ENCODE measurements at regions of chr2 and their contacts with region 1.

Region 1: GRCh38 chr2:238784671-238785527 is 63.0 kb upstream of the TWIST2 start:
- DNase-seq: peak; percentile 58 to 65
- ATAC-seq: peak; percentile 50 to 88 (median 79)
- H3K4me3 ChIP-seq: no peak overlapping the region
- H3K27ac ChIP-seq: no peak overlapping the region
- H3K4me1 ChIP-seq: no peaks in the 10 kb centered on the region
- H3K27me3 ChIP-seq: peaks cover 0 to 7% (median 5%) of the 10 kb centered on the region in 7 donors
- CTCF ChIP-seq: peak; percentile 62 to 91 (median 87)

Region 2: GRCh38 chr2:238352361-238352760 is 432.5 kb before region 1 on chr2:
- intact Hi-C with region 1: loop called in 2 of 10 experiments (anchors 10 kb)
- DNase-seq: no peak
- ATAC-seq: peak in 2 of 8 donors; percentile 13 to 31
- H3K4me3 ChIP-seq: no peak overlapping the region
- H3K27ac ChIP-seq: no peak overlapping the region
- H3K4me1 ChIP-seq: peaks cover 0 to 4% (median 0%) of the 10 kb centered on the region in 9 donors
- H3K27me3 ChIP-seq: no peaks in the 10 kb centered on the region
- CTCF ChIP-seq: no peak

Region 3: DNA sequence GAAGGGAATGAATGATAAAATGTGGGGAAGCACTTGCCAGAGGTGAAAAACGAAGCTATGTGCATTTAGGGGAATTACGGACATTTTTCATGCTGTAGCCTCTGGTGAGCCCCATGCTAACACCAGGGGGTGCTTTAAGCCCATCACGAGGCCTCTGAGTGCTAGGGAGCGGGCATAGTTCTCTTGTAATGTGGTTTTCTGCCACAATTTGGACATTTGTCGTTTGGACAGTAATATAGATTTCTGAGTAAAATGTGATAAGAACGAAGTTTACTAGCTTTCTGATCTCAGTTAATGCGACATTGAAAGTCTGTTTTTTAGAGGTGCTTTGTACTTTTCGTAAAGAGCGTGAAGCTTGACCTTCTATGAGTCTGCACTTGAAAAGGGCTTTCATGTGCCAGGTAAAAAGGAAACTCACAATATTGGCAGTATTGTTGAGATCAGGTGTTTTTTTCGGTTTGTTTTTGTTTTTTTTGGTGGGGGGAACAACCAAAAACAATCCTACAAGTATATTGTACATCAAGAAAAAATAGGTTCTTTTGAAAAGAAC is 414.0 kb before region 1 on chr2:
- intact Hi-C with region 1: loop called in 9 of 10 experiments (anchors 2 to 10 kb)
- DNase-seq: peak; percentile 43 to 48
- ATAC-seq: peak; percentile 89 to 99 (median 94)
- H3K4me3 ChIP-seq: no peak overlapping the region
- H3K27ac ChIP-seq: no peak overlapping the region
- H3K4me1 ChIP-seq: peaks cover 0 to 3% (median 0%) of the 10 kb centered on the region in 9 donors
- H3K27me3 ChIP-seq: no peaks in the 10 kb centered on the region
- CTCF ChIP-seq: peak; percentile 53 to 89 (median 81)

Region 4: GRCh38 chr2:238513346-238513745 is 271.6 kb before region 1 on chr2:
- intact Hi-C with region 1: loop called in 6 of 10 experiments (anchors 2 to 10 kb)
- DNase-seq: no peak
- ATAC-seq: peak in 3 of 8 donors; percentile 51 to 64 (median 62)
- H3K4me3 ChIP-seq: no peak overlapping the region
- H3K27ac ChIP-seq: no peak overlapping the region
- H3K4me1 ChIP-seq: no peaks in the 10 kb centered on the region
- H3K27me3 ChIP-seq: peaks cover 0 to 16% (median 8%) of the 10 kb centered on the region in 7 donors
- CTCF ChIP-seq: peak; percentile 24 to 62 (median 50)

Region 5: GRCh38 chr2:238523158-238524110 is 261.5 kb before region 1 on chr2:
- intact Hi-C with region 1: loop called in 5 of 10 experiments (anchors 10 kb)
- DNase-seq: no peak
- ATAC-seq: peak in 4 of 8 donors; percentile 40 to 68 (median 50)
- H3K4me3 ChIP-seq: no peak overlapping the region
- H3K27ac ChIP-seq: no peak overlapping the region
- H3K4me1 ChIP-seq: no peaks in the 10 kb centered on the region
- H3K27me3 ChIP-seq: peaks cover 0 to 30% (median 0%) of the 10 kb centered on the region in 7 donors
- CTCF ChIP-seq: peak in 4 of 9 donors; percentile 14 to 23 (median 21)

Region 6: DNA sequence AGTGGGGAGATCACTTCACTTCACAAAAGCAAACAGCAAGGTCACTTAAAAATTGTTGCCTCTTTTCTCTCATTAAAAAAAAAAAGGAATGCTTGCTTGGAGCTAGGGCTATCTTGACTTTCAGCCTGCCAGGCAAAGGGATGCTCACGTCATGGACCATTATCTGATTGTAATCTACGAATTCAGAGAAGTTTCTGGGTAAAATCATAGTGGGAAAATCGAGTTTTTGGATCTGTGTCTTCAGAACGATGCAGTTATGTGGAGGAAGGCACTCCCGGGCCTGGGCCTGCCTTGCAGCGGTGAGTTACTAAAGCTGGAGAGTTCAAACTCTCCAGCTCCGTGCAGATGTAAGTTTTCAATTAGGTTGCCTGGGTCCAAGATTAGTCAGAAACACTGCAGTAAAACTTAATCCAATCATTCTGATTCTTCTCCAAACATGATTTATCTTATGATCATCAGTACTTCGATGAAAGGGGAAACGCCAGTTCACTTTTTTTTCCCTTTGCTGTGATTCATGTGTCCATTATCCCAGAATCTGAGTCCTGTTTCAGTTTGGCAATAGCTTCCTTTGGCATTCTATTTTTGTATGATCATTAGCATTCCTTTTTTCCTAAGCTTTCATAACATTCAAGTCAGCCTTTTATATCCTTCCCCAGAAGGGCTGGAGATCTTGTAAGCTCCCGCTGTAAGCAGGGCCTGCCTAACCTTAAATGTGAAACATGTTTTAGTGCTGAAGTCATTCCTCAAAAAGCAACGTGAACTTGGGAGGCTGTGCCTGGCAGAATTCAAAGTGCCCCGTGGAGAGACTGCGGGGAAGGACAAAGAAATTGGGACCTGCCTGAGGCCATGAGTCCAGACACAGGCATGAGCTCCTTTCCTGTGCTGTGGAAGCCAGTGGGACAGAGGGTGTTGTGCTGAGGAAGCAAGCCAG is 56.3 kb before region 1 on chr2:
- intact Hi-C with region 1: loop called in 1 of 10 experiments (anchors 5 kb)
- DNase-seq: no peak
- ATAC-seq: peak; percentile 49 to 73 (median 65)
- H3K4me3 ChIP-seq: no peak overlapping the region
- H3K27ac ChIP-seq: peak overlapping the region; percentile 5 to 78 (median 60)
- H3K4me1 ChIP-seq: peaks cover 0 to 30% (median 15%) of the 10 kb centered on the region in 9 donors
- H3K27me3 ChIP-seq: no peaks in the 10 kb centered on the region
- CTCF ChIP-seq: no peak

Region 7: GRCh38 chr2:238835726-238836301 is 50.9 kb after region 1 on chr2:
- intact Hi-C with region 1: no loop called
- DNase-seq: no peak
- ATAC-seq: no peak
- H3K4me3 ChIP-seq: no peak overlapping the region
- H3K27ac ChIP-seq: no peak overlapping the region
- H3K4me1 ChIP-seq: no peaks in the 10 kb centered on the region
- H3K27me3 ChIP-seq: peaks cover 0 to 36% (median 21%) of the 10 kb centered on the region in 7 donors
- CTCF ChIP-seq: no peak

Region 8: GRCh38 chr2:238945433-238946150 is 160.7 kb after region 1 on chr2:
- intact Hi-C with region 1: loop called in 1 of 10 experiments (anchors 10 kb)
- DNase-seq: peak; percentile 36 to 64
- ATAC-seq: peak; percentile 56 to 82 (median 78)
- H3K4me3 ChIP-seq: no peak overlapping the region
- H3K27ac ChIP-seq: no peak overlapping the region
- H3K4me1 ChIP-seq: peaks cover 0 to 8% (median 0%) of the 10 kb centered on the region in 9 donors
- H3K27me3 ChIP-seq: peaks cover 0 to 30% (median 7%) of the 10 kb centered on the region in 7 donors
- CTCF ChIP-seq: peak; percentile 35 to 72 (median 64)